WTC11 (cell line): ENCODE measurements at regions of chr12 and their contacts with region 1.

Region 1: DNA sequence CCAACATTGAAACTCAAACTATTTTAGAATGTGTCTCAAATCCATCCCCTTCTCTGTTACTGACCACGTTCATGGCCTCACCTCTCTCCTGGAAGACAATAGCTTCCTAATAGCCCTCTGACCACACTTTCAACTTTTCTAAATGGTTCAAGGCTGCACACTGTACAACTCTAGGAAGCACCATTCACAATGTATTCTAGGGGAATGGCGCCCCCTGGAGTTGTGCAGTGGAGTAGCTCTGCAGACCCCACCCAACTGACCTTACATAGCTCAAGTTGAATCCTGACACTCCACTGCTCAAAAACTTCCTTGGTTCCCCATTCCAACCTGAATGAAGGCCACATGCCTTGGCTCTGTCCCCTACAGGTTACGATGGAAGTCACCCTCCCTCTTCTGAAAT is 77.6 kb downstream of the GAS2L3 start:
- DNase-seq: no peak
- ATAC-seq: no peak
- H3K4me3 Mint-ChIP-seq: no peak overlapping the region
- H3K27ac Mint-ChIP-seq: no peak overlapping the region
- H3K4me1 Mint-ChIP-seq: peaks cover 10% of the 10 kb centered on the region
- H3K27me3 Mint-ChIP-seq: peaks cover 2% of the 10 kb centered on the region; the same call in 1 of the 2 replicates
- CTCF ChIP-seq: peak; percentile 47

Region 2: GRCh38 chr12:100266835-100267618 is 384.1 kb before region 1 on chr12 and contains the starts of genes DEPDC4 and SCYL2:
- CTCF ChIA-PET with region 1: no interaction called
- POLR2A ChIA-PET with region 1: interaction called, 11 read pairs
- DNase-seq: peak; percentile 92
- ATAC-seq: peak; percentile 92
- H3K4me3 Mint-ChIP-seq: peak within 1 kb of the TSS; percentile 98
- H3K27ac Mint-ChIP-seq: peak within 1 kb of the TSS; percentile 99
- H3K4me1 Mint-ChIP-seq: peaks cover 20% of the 10 kb centered on the region
- H3K27me3 Mint-ChIP-seq: no peaks in the 10 kb centered on the region
- CTCF ChIP-seq: no peak
- total RNA-seq, gene DEPDC4: 4.4 to 5.5 TPM (median 5.5 TPM) in 3 replicates
- total RNA-seq, gene SCYL2: 33.4 to 37.1 TPM (median 33.8 TPM) in 3 replicates

Region 3: GRCh38 chr12:100473716-100474150 is 177.4 kb before region 1 on chr12 and contains the start of gene NR1H4:
- CTCF ChIA-PET with region 1: no interaction called
- POLR2A ChIA-PET with region 1: no interaction called
- DNase-seq: no peak
- ATAC-seq: no peak
- H3K4me3 Mint-ChIP-seq: no peak within 1 kb of the TSS
- H3K27ac Mint-ChIP-seq: no peak within 1 kb of the TSS
- H3K4me1 Mint-ChIP-seq: peaks cover 7% of the 10 kb centered on the region
- H3K27me3 Mint-ChIP-seq: no peaks in the 10 kb centered on the region
- CTCF ChIP-seq: no peak
- total RNA-seq, gene NR1H4: not detected in 3 replicates

Region 4: DNA sequence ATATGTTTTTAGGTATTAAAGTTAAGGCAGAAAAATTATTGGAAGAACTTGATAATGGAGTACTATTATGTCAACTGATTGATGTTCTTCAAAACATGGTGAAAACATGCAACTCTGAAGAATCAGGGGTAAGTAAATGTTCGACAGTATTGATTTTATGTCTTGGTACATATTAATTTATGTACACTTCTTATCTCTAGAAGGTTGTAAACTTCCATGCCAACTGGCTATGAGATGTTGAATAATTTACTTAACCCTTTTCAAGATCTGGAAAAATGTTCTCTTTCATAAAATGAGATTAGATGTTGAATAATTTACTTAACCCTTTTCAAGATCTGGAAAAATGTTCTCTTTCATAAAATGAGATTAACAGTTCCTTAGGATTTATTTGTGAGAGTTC is 49.5 kb before region 1 on chr12:
- CTCF ChIA-PET with region 1: no interaction called
- POLR2A ChIA-PET with region 1: no interaction called
- DNase-seq: no peak
- ATAC-seq: no peak
- H3K4me3 Mint-ChIP-seq: no peak overlapping the region
- H3K27ac Mint-ChIP-seq: no peak overlapping the region
- H3K4me1 Mint-ChIP-seq: no peaks in the 10 kb centered on the region
- H3K27me3 Mint-ChIP-seq: no peaks in the 10 kb centered on the region
- CTCF ChIP-seq: no peak